Left cardiac atrium (tissue), 4 donors: ENCODE measurements at regions of chr11 and their contacts with region 1.

Region 1: DNA sequence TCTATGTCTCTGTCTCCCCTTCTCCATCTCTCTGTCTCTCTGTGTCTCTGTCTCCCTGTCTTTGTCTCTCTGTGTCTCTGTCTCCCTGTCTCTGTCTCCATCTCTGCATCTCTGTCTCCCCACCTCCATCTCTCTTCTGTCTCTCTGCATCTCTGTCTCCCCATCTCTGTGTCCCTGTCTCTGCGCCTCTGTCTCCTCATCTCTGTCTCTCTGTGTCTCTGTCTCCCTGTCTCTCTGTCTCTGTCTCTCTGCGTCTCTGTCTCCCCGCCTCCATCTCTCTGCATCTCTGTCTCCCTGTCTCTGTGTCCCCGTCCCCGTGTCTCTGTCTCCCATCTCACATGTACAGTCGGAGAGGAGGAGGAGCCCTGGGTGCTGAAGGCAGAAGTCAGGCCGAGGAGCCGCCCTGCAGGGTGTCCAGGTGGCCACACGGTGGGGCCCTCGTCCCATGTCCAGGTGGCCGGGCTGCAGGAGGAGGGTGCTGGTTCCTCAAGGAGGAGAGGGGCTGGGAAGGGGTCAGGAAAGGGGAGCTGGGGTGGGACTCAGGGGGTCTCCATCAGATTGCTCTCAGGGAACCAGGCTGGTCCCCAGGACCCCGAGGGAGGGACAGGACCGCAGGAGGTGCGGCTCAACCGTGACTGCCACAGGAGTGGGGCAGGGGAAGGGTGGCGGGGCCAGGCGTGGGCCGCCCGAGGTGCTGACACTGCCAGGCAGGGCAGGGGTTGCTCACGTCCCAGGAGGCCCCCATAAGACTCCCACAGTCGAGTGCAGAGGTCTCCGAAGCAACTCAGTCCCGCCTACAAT is 25.6 kb upstream of the TH start:
- DNase-seq: peak; percentile 73
- ATAC-seq: peak; percentile 84 to 85

Region 2: GRCh38 chr11:2156416-2157182 is 40.6 kb before region 1 on chr11:
- intact Hi-C with region 1: no loop called
- DNase-seq: peak; percentile 71
- ATAC-seq: peak; percentile 38 to 55

Region 3: GRCh38 chr11:2298795-2299761 is 101.9 kb after region 1 on chr11:
- intact Hi-C with region 1: loop called (anchors 5 kb)
- DNase-seq: peak; percentile 29
- ATAC-seq: no peak

Region 4: DNA sequence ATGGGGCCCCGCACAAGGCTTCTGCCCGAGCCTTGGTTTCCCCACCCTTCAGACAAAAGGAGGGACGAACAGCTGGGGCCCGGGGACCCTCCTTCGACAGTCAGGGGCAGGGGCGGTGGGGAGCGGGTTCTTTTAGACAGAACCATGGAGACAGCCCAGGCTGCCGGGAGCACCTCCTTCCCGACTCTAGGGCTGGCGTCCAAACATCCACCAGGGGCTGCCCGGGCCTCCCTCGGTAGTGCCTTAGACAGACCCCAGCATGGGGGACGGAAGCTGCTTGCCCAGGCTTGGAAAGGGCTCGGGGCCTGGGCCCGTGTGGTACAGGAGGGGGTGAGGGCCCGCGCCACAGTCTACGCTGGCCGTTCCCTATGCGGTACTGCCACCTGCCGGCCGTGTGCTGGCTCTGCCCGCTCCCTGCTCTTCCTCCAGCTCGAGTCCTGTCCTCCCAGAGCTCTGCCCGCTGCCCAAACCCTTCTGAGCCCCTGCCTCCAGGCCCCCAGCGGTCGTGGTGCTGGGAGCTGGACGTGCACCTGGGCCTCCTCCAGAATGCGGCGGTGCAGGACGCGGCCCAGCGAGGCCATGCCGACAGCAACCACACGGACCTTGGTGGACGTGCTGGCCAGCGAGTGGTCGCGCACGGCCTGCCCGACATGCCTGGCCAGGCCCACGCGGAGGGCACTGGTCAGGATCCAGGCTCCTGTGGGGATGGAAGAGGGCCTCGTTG is 223.5 kb after region 1 on chr11:
- intact Hi-C with region 1: loop called (anchors 1 to 2 kb)
- DNase-seq: peak; percentile 74
- ATAC-seq: peak; percentile 95

Region 5: DNA sequence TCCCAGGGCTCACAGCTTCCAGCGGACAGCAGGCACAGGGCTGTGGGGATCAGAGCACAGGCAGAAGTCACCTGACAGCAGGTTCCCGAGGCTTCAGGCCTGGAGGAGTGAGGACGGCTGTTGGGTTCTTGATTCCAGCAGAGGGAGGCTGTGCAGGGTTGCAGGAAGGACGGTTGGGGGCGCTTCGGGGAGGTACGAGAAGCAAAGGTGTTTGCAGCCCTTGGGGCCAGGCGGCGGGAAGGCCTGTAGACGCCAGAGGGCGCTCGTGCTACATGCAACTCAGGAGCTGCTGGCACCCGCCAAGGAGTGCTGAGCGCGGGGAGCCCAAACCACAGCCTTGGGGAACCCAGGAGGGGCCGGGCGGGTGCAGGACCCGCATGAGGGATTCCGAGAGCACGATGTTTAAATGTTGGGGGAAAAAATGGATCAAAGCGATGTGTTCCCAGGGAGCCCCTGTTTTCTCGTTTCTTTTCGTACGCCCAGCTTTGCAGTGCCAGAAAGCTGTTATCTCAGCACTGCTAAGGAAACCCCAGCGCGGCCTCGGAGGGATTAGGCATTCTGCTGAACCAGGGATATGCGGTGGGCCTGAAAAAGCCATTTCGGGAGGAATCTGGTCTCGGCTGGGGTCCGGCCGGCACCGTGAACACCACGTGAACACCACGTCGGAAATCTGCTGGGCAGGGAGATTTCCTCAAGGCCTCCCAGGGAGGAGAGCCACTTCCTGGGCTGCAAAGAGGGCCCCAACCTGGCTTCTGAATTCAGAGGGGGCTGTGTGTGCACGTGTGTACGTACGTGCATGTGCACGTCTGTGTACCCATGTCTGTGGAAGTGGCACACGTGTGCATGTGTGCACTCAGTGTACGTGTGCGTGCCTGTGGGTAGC is 335.8 kb after region 1 on chr11:
- intact Hi-C with region 1: loop called (anchors 10 kb)
- DNase-seq: peak; percentile 92
- ATAC-seq: peak; percentile 88 to 89

Region 6: DNA sequence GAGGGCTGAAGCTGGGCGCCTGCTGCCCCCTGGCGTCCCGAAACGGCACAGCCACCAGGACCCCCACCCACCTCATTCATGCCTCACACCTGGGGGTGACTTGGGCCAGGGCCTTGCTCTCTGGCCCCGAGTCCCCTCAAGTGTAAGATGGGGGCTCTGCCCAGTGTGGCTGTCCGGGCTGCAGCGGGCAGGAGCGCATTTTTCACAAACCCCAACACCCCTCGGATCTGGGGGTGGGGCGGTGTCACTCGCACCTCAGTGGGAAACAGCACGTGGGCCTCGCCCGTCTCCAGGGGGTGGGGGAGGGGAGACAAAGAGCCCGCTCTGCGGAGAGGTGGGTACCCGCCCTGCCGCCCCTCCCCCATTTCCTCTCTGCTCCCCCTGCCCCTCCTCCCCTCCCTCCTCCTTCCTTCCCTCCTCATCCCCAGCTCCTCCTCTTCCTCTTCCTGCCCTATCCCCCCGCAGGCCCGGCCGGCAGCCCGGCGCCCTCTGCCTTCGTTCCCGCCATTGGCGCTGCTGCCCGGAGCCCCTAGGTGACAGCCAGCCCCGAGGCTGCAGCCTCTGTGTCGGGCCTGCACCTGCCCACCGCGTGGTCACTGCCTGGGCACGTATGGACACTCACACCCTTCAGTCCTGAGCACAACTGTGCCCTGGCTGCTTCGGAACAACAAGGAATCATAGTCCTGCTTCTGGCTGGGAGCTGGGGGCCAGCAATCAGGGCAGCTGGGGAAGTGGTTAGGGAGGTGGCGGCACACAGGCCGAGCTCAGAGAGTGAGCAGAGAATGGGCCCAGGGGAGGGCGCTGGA is 695.2 kb after region 1 on chr11:
- intact Hi-C with region 1: loop called in 1 of 2 experiments (anchors 10 kb)
- DNase-seq: peak; percentile 75
- ATAC-seq: peak; percentile 50 to 70